ENCODE measurements at regions of chr13 and their contacts with region 1.

Region 1: DNA sequence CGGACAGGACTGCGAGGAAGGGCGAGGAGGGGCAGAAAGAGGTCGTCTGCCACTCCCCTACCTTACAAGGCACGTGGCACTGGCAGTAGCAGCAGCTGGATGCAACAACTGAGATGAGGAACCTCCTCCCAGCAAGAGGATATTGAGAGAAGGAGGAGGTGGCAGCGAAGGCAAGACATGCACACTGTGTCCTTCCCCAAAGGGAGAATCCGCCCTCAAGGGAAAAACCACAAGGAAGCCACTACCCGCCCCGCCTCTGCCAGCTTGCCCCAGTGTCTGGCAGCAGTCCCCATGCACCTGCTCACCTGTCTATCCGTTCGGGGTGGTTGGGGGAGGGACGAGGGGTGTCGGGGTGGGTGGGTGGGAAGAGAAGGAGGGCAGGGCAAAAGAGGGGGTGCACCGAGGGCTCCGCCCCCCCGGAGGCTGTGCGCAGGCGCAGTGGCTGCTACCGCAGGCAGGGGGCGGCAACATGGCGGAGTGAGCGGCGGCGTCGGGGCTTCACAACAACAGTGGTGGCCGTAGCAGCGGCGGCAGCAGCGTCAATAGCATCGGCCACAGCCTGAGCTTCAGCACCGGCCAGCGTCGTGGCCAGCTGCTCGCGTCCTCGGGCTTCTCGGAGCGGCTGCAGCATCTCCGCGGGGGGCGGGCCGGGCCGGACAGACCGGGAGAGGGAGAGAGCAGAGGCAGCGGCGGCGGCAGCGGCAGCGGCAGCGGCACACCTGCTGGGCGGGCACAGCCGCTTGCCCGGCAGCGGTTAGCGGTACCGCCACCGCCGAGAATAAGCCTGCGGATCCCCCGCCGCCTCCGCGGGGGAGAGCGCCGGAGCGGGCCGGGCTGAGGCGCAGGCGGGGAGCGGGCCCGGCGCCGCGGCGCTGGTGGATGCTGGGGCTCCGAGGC is at the start of gene NBEA:
- DNase-seq: no peak
- ATAC-seq: peak; percentile 83
- H3K4me3 ChIP-seq: peak within 1 kb of the TSS; percentile 59 to 66
- H3K27ac ChIP-seq: no peak within 1 kb of the TSS
- H3K4me1 ChIP-seq: no peaks in the 10 kb centered on the region
- H3K27me3 ChIP-seq: peaks cover under 1% of the 10 kb centered on the region; the same call in 1 of the 2 replicates
- CTCF ChIP-seq: no peak
- total RNA-seq, gene NBEA: 3.3 TPM

Region 2: DNA sequence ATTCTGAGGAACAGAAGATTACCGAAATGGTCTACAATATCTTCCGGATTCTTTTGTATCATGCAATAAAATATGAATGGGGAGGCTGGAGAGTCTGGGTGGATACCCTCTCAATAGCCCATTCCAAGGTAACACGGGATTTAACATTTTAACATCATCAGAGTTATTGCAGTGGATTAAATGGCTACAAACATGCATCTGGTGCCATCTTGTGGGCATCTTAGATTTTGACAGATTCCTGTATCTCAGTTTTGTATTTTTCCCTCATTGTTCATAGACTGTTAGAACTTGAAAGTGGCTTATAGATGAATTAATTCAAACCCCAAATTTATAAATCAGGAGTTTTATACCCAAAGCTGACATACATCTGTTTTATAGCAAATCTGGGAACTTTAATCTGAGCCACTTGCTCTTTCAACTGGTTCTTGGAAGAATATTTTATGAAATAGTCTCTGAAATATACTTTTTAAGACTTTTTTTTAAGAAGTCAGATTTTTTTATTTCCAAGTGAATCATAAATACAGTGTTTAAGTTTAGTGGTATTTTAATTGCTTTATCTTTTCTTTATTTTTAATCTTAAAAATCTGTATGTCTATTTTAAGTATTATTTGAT is 215.2 kb after region 1 on chr13:
- CTCF ChIA-PET with region 1: no interaction called
- POLR2A ChIA-PET with region 1: no interaction called
- in situ Hi-C with region 1: no loop called
- intact Hi-C with region 1: loop called (anchors 10 kb)
- DNase-seq: no peak
- ATAC-seq: peak; percentile 58; the same call in 1 of the 2 replicates
- H3K4me3 ChIP-seq: no peak overlapping the region
- H3K27ac ChIP-seq: no peak overlapping the region
- H3K4me1 ChIP-seq: no peaks in the 10 kb centered on the region
- H3K27me3 ChIP-seq: no peaks in the 10 kb centered on the region
- CTCF ChIP-seq: peak; percentile 57; the same call in 1 of the 2 replicates

Measured in Panc1 (cell line).